ENCODE measurements at regions of chr4 and their contacts with region 1.

Region 1: DNA sequence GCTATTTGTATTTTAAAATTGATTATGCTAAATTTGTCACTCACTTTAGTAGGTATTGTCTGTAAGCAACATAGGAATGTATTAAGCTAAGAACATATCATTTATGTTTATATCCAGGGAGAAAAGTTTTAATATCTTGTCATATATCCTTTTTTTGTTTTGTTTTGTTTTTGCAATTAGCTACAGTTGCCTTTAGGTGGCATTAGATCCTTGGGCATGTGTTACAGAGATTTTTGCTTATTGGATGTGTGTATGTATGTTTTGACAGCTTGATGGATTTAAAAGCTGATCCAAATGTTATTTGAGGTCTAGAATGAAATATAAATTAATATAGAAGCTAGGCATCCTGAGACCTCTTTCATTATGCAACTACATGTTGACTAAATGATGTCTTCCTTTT is 36.1 kb upstream of the OTUD4 start:
- DNase-seq: no peak
- H3K4me3 ChIP-seq: no peak overlapping the region
- H3K27ac ChIP-seq: no peak overlapping the region
- H3K4me1 ChIP-seq: no peaks in the 10 kb centered on the region
- H3K27me3 ChIP-seq: no peaks in the 10 kb centered on the region
- CTCF ChIP-seq: peak; percentile 67

Region 2: GRCh38 chr4:145481164-145481941 is 264.8 kb after region 1 on chr4 and contains the start of gene SMAD1:
- CTCF ChIA-PET with region 1: no interaction called
- POLR2A ChIA-PET with region 1: no interaction called
- intact Hi-C with region 1: no loop called
- DNase-seq: peak; percentile 38 to 74
- H3K4me3 ChIP-seq: peak within 1 kb of the TSS; percentile 86
- H3K27ac ChIP-seq: peak within 1 kb of the TSS; percentile 71
- H3K4me1 ChIP-seq: peaks cover 22% of the 10 kb centered on the region
- H3K27me3 ChIP-seq: no peaks in the 10 kb centered on the region
- CTCF ChIP-seq: no peak
- total RNA-seq, gene SMAD1: 15.1 and 16.1 TPM in 2 replicates

Region 3: GRCh38 chr4:146333187-146333894 is 1116.8 kb after region 1 on chr4:
- CTCF ChIA-PET with region 1: no interaction called
- POLR2A ChIA-PET with region 1: no interaction called
- intact Hi-C with region 1: loop called (anchors 10 kb)
- DNase-seq: no peak
- H3K4me3 ChIP-seq: no peak overlapping the region
- H3K27ac ChIP-seq: no peak overlapping the region
- H3K4me1 ChIP-seq: peaks cover 42% of the 10 kb centered on the region
- H3K27me3 ChIP-seq: no peaks in the 10 kb centered on the region
- CTCF ChIP-seq: no peak